ENCODE measurements at regions of chr1 and their contacts with region 1.

Region 1: DNA sequence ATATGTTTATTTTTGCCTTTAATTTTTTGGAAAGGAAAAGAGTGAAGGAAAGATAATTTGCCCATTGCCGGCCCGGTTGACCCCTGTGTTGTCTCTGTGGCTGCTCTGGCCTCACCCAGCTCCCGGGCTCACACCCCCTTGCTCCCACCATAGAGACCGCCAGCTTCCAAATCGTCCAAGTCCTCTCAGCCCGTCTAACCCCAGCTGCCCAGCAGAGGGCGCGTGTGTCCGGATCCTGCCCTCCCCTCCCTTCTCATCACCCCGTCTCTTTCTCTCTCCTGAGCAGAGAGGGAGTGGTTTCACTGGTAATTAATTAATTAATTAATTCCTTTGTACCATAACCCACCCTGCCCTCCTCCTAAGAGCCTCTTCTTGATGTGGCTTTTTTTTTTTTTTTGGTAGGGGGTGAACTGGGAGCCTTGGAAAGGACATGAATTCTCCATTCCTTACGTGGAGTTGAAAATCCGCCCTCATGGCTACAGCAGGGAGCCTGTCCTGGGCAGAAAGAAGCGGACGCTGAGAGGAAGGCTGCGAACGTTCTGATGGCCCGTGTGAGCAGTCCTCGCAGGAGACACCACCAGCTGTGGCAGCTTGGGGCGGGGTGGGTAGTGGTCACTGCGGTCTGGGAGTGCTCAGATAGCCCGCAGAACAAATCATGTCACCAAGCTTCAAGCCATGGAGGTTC is 45.9 kb downstream of the KIAA0040 start:
- DNase-seq: no peak
- H3K4me3 ChIP-seq: no peak overlapping the region
- H3K27ac ChIP-seq: no peak overlapping the region
- H3K27me3 ChIP-seq: peaks cover 4% of the 10 kb centered on the region
- CTCF ChIP-seq: peak; percentile 88

Region 2: GRCh38 chr1:175081983-175082382 is 64.7 kb before region 1 on chr1:
- CTCF ChIA-PET with region 1: no interaction called
- POLR2A ChIA-PET with region 1: no interaction called
- DNase-seq: no peak
- H3K4me3 ChIP-seq: no peak overlapping the region
- H3K27ac ChIP-seq: no peak overlapping the region
- H3K27me3 ChIP-seq: peaks cover 2% of the 10 kb centered on the region
- CTCF ChIP-seq: no peak

Region 3: GRCh38 chr1:175124861-175125260 is 21.8 kb before region 1 on chr1:
- CTCF ChIA-PET with region 1: interaction called, 10 read pairs
- POLR2A ChIA-PET with region 1: no interaction called
- DNase-seq: no peak
- H3K4me3 ChIP-seq: no peak overlapping the region
- H3K27ac ChIP-seq: no peak overlapping the region
- H3K27me3 ChIP-seq: peaks cover 4% of the 10 kb centered on the region
- CTCF ChIP-seq: no peak

Region 4: GRCh38 chr1:175319418-175320230 is 173.0 kb after region 1 on chr1:
- CTCF ChIA-PET with region 1: interaction called, 101 read pairs
- POLR2A ChIA-PET with region 1: no interaction called
- DNase-seq: peak; percentile 23
- H3K4me3 ChIP-seq: no peak overlapping the region
- H3K27ac ChIP-seq: no peak overlapping the region
- H3K27me3 ChIP-seq: no peaks in the 10 kb centered on the region
- CTCF ChIP-seq: peak; percentile 81

Region 5: GRCh38 chr1:176058686-176059085 is 912.0 kb after region 1 on chr1:
- CTCF ChIA-PET with region 1: interaction called, 16 read pairs
- POLR2A ChIA-PET with region 1: no interaction called
- DNase-seq: no peak
- H3K4me3 ChIP-seq: no peak overlapping the region
- H3K27ac ChIP-seq: no peak overlapping the region
- H3K27me3 ChIP-seq: no peaks in the 10 kb centered on the region
- CTCF ChIP-seq: no peak